Activated CD4-positive, alpha-beta T cell treated with anti-CD3 and anti-CD28 coated beads for 36 hours (primary cell): ENCODE measurements at regions of chr2 and their contacts with region 1.

Region 1: DNA sequence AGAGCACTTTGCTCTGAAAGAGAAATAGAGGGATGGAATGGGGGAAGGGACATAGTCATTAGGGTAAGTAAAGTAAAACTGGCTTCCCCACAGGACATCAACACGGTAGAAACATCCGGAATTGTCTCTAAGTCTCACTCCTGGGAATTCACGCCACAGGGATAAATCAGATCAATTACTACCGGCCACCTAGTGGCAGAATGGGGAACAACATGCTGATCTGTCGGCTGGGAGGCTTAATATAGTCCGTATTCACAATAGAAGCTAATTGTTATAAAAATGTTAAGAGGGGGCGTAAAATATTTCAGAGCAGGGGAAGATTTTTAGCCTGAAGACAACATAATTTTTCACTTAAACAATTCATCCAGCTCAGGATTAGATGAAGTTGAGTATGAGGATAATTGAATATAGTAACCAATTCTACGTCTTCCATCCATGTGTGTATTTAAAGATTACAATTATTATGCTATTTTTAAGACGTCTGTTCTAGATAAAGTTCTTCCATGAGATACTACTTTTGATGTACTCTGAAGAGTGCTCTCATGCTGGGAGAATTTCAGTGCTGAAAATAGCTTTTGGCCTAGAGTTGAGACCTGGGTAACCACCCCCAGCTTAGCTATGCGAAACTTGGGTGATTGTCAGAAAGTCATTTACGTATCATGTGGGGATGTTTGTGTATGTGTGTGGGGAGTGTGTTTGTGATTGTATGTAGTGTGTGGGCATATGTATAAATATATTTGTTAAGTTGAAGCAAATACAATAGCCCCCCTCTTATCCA is 65.7 kb downstream of the LRRTM1 start:
- DNase-seq: peak; percentile 39
- ATAC-seq: no peak
- H3K4me3 Mint-ChIP-seq: no peak overlapping the region
- H3K27ac Mint-ChIP-seq: no peak overlapping the region
- H3K4me1 Mint-ChIP-seq: no peaks in the 10 kb centered on the region
- H3K27me3 Mint-ChIP-seq: peaks cover 2% of the 10 kb centered on the region

Region 2: DNA sequence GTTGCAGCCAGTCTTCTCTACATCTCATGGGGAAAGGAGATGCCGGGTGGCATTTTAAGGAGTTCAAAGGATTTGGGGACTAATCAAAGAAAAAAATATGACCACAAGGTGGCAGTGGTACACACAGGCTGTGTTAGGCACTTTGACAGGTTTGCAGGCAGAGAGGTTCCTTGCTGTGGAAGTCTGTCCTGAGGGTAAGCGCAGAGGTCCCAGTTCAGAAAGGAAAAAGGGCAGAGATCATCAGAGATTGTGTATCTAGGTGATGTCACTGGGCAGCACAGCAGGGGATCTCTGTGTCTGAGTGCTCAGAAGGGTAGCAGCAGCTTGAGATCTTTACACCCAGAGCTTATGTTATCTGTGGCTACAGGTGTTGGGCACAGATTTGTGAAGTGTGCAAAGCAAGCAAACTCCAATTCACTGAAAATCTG is 165.7 kb before region 1 on chr2:
- CTCF ChIA-PET with region 1: no interaction called
- POLR2A ChIA-PET with region 1: no interaction called
- intact Hi-C with region 1: loop called in 1 of 2 experiments (anchors 1 kb)
- DNase-seq: peak; percentile 21
- ATAC-seq: no peak
- H3K4me3 Mint-ChIP-seq: no peak overlapping the region
- H3K27ac Mint-ChIP-seq: no peak overlapping the region
- H3K4me1 Mint-ChIP-seq: no peaks in the 10 kb centered on the region
- H3K27me3 Mint-ChIP-seq: peaks cover 6% of the 10 kb centered on the region